Stomach (tissue), 19 donors: ENCODE measurements at regions of chr3 and their contacts with region 1.

Region 1: DNA sequence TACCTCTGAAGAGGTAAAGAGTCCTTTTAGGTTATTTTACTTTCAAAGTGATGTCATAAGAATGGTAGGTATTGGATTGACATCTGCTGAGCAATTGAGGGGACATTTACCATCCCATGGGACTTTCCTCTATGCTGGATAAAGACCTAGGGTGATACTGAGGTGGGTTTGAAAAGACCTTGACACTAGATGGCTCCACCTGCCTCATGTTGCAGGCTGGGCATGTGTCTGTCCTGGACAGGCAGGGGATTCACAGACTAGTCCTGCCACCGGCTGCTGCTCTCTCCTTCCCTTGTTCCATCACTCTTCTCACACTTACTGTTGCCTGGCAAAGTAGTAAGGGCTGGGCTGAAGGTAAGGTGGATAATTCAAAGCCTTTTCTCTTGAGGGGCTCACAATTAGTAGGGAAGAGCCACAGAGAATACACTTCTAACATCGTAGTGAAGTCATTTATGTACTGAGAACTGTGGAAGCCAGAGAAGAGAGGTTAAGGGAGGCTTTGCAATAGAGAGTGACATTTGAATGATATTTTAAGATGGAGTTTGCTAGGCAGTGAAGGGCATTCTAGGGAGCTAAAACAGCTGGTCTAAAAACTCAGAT is 27.7 kb downstream of the TRAK1 start:
- DNase-seq: peak; percentile 56 to 81
- H3K4me3 ChIP-seq: no peak overlapping the region
- H3K27ac ChIP-seq: peak overlapping the region in 3 of 5 donors; percentile 25 to 59 (median 51)
- H3K4me1 ChIP-seq: peaks cover 34 to 87% (median 62%) of the 10 kb centered on the region in 4 donors
- H3K27me3 ChIP-seq: no peaks in the 10 kb centered on the region
- CTCF ChIP-seq: peak in 4 of 7 experiments; percentile 3 to 51 (median 29)
- EP300 ChIP-seq: no peak
- POLR2A ChIP-seq: no peak

Region 2: DNA sequence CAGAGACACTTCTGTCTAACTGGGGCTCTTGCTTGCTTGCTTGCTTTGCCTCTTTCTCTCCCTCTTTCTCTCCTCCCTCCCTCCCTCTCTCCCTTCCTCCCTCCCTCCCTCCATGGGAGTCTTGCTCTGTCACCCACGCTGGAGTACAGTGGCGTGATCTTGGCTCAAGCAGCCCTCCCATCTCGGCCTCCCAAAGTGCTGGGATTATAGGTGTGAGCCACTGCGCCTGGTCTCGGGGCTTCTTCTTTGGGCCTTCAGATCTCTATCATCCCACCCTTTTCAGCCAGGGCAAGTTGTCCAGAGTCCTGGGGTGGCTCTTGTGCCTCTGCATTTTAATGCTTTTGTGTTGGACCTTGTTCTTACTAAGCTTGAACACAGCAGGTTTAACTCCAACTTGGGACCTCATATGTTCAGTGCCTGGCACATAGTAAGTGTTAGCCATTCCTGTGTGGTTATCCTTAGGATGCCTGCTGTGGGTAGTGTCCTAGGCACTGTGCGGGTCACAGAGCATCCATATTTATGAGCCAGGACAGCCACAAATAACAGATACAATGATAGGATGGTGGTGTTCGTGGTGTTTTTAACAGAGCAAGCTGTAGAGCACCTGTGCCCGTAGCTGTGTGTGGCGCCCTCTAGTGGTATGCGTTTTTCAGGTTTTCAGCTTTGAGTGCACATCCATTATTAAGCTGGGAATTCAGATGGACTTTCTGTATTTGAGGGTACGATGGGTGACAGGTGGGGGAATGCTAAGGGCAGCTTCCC is 72.0 kb after region 1 on chr3:
- intact Hi-C with region 1: loop called (anchors 5 kb)
- DNase-seq: peak; percentile 83 to 89
- H3K4me3 ChIP-seq: no peak overlapping the region
- H3K27ac ChIP-seq: peak overlapping the region; percentile 50 to 73 (median 61)
- H3K4me1 ChIP-seq: peaks cover 9 to 55% (median 43%) of the 10 kb centered on the region in 4 donors
- H3K27me3 ChIP-seq: no peaks in the 10 kb centered on the region
- CTCF ChIP-seq: peak in 6 of 7 experiments; percentile 30 to 89 (median 74)
- EP300 ChIP-seq: no peak
- POLR2A ChIP-seq: no peak